ENCODE measurements at regions of chr9 and their contacts with region 1.

Region 1: DNA sequence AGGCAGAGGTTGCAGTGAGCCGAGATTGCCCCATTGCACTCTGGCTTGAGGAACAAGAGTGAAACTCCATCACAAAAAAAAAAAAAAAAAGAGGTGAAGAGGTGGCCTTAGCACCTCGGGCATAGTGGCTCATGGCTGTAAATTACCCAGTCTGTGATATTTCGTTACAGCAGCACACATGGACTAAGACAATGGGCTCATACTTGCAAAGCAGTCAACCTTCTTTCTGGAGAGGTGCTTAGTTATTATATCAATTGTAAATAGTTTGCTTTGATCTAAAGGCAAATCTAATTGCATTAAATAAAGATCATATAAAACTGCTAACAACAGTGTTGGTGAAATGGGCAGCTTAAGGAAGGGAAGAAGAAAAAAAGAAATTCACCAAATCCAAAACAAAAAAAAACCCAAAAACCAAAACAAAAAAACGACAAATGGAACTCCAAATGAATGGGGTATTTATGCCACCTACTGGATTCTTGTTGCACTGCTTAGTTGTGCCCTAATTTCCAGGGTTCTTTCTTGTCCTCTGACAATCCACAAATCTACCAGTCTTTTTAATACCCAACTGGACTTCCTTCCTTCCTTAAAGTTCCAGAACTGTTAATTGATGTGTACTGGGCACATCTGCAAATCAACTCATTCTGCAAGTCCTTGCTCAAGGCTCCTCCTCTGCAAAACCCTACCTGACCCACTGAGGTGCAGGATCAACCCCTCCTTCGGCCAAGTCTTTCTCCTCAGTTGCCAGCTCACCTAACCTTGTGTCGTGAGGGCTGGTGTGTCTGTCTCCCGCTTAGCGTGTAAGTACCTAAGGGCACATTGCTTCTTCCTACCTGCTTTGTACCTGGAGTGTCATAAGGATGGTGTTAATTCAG is 35.0 kb upstream of the DMRT1 start:
- DNase-seq: no peak
- H3K4me3 Mint-ChIP-seq: no peak overlapping the region
- H3K27ac Mint-ChIP-seq: no peak overlapping the region
- H3K4me1 Mint-ChIP-seq: no peaks in the 10 kb centered on the region
- H3K27me3 Mint-ChIP-seq: no peaks in the 10 kb centered on the region

Region 2: GRCh38 chr9:347667-348292 is 458.7 kb before region 1 on chr9:
- CTCF ChIA-PET with region 1: no interaction called
- intact Hi-C with region 1: loop called (anchors 5 kb)
- DNase-seq: no peak
- H3K4me3 Mint-ChIP-seq: no peak overlapping the region
- H3K27ac Mint-ChIP-seq: no peak overlapping the region
- H3K4me1 Mint-ChIP-seq: peaks cover 23% of the 10 kb centered on the region
- H3K27me3 Mint-ChIP-seq: no peaks in the 10 kb centered on the region

Region 3: GRCh38 chr9:385818-386398 is 420.6 kb before region 1 on chr9:
- CTCF ChIA-PET with region 1: no interaction called
- intact Hi-C with region 1: loop called (anchors 1 kb)
- DNase-seq: peak; percentile 64
- H3K4me3 Mint-ChIP-seq: no peak overlapping the region
- H3K27ac Mint-ChIP-seq: no peak overlapping the region
- H3K4me1 Mint-ChIP-seq: no peaks in the 10 kb centered on the region
- H3K27me3 Mint-ChIP-seq: no peaks in the 10 kb centered on the region

Region 4: GRCh38 chr9:792282-793260 is 13.9 kb before region 1 on chr9:
- CTCF ChIA-PET with region 1: interaction called, 12 read pairs
- intact Hi-C with region 1: no loop called
- DNase-seq: no peak
- H3K4me3 Mint-ChIP-seq: no peak overlapping the region
- H3K27ac Mint-ChIP-seq: no peak overlapping the region
- H3K4me1 Mint-ChIP-seq: no peaks in the 10 kb centered on the region
- H3K27me3 Mint-ChIP-seq: no peaks in the 10 kb centered on the region